ENCODE measurements at regions of chr18 and their contacts with region 1.

Region 1: GRCh38 chr18:49858309-49859020 is 45.1 kb upstream of the ACAA2 start:
- DNase-seq: no peak
- H3K4me3 ChIP-seq: no peak overlapping the region
- H3K27ac ChIP-seq: no peak overlapping the region
- H3K4me1 ChIP-seq: peaks cover 0 to 2% (median 0%) of the 10 kb centered on the region in 4 donors
- H3K27me3 ChIP-seq: peaks cover 0 to under 1% (median 0%) of the 10 kb centered on the region in 4 donors
- CTCF ChIP-seq: peak; percentile 80 to 85 (median 84)
- EP300 ChIP-seq: no peak
- POLR2A ChIP-seq: no peak

Region 2: GRCh38 chr18:49510393-49511115 is 347.9 kb before region 1 on chr18:
- intact Hi-C with region 1: loop called (anchors 1 kb)
- DNase-seq: no peak
- H3K4me3 ChIP-seq: no peak overlapping the region
- H3K27ac ChIP-seq: no peak overlapping the region
- H3K4me1 ChIP-seq: no peaks in the 10 kb centered on the region
- H3K27me3 ChIP-seq: peaks cover 0 to 4% (median 0%) of the 10 kb centered on the region in 4 donors
- CTCF ChIP-seq: peak; percentile 68 to 81 (median 75)
- EP300 ChIP-seq: no peak
- POLR2A ChIP-seq: no peak

Region 3: DNA sequence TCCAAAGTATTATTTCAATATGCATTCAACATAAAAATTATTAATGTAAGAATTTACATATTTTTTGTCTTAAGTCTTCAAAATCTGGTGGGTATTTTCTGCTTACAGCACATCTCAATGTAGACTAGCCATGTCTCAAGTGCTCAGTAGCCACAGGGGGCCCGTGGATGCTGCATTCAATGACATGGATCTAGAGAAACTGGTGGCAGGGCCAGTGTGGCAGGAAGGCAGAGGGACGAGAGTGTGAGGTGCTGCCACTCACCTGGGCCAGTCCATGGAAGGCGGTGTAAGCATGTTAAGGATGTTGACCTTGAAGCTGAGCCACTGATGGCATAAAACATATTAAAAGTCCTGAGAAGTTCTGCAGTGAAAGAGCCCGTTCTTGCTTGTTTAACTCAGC is 302.8 kb before region 1 on chr18:
- intact Hi-C with region 1: loop called (anchors 5 kb)
- DNase-seq: no peak
- H3K4me3 ChIP-seq: no peak overlapping the region
- H3K27ac ChIP-seq: no peak overlapping the region
- H3K4me1 ChIP-seq: peaks cover 2 to 6% (median 3%) of the 10 kb centered on the region in 4 donors
- H3K27me3 ChIP-seq: peaks cover 0 to 31% (median 8%) of the 10 kb centered on the region in 4 donors
- CTCF ChIP-seq: no peak
- EP300 ChIP-seq: no peak
- POLR2A ChIP-seq: no peak

Measured in esophagus muscularis mucosa (tissue), 4 donors.